A673 (cell line): ENCODE measurements at regions of chr6 and their contacts with region 1.

Region 1: DNA sequence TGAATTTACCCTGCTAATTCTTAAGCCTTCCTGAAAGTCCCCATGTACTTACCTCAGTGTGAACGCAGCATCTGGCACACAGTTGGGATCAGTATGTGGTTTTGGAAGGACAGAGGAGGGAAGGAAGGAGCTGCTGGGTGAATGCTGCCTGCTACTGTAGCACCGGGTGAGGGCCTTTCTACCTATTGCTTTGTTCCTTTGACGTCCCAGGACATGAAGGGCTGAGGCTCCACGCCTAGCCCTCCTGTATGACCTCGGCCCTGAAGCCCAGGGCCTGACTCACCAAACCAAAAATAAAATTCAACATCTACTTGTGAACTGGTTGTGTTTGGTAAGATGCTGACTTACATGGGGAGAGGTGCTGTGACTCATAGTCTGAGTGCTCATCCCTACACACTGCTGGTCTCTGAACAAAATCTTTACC is 51.1 kb downstream of the ARID1B start:
- DNase-seq: no peak
- H3K4me3 ChIP-seq: no peak overlapping the region
- H3K27ac ChIP-seq: no peak overlapping the region
- H3K4me1 ChIP-seq: peaks cover 36% of the 10 kb centered on the region
- H3K27me3 ChIP-seq: no peaks in the 10 kb centered on the region
- CTCF ChIP-seq: no peak

Region 2: DNA sequence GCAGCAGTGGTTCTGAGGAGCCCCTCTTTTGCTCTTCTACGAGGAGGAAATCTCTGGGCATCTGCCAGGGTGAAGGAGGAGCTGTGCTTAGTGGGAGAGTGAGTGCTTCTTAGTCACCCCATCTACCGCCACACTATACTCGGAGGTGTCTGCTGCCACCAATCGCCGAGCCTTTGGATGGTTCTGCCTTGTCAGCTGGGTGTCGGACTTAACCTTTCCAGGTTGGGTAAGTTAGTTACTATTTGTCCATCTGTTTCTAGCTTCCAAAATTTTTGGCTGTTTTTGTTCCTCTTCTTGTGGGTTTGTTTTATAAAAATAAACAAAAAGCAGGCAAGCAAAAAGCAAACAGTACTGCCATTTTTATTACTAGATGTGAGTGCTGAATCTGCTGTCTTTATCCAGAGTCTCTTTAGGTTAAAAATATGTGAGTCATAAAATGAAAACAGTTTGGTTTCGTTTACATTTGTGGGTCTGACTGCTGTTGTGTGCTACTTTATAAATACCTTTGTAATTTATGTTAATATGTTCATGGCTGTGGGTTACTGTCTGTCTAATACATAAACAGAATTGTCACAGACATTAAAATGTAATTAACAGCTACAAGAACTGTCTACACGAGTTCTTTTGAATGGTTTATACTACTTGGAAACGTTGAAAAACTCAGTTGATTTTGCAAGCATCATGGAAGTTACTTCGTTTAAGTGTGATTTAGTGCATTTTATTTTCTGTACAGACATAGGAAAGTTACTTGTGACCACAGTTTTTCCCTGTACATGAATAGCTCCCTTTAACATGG is 38.1 kb after region 1 on chr6:
- CTCF ChIA-PET with region 1: no interaction called
- POLR2A ChIA-PET with region 1: interaction called, 11 read pairs
- intact Hi-C with region 1: no loop called
- DNase-seq: no peak
- H3K4me3 ChIP-seq: no peak overlapping the region
- H3K27ac ChIP-seq: no peak overlapping the region
- H3K4me1 ChIP-seq: peaks cover 26% of the 10 kb centered on the region
- H3K27me3 ChIP-seq: no peaks in the 10 kb centered on the region
- CTCF ChIP-seq: no peak